Activated naive CD4-positive, alpha-beta T cell treated with anti-CD3 and anti-CD28 coated beads for 36 hours (primary cell): ENCODE measurements at regions of chr4 and their contacts with region 1.

Region 1: GRCh38 chr4:11623726-11624037 is 195.0 kb upstream of the HS3ST1 start:
- DNase-seq: peak; percentile 35
- H3K4me3 Mint-ChIP-seq: no peak overlapping the region
- H3K27ac Mint-ChIP-seq: no peak overlapping the region
- H3K4me1 Mint-ChIP-seq: no peaks in the 10 kb centered on the region
- H3K27me3 Mint-ChIP-seq: no peaks in the 10 kb centered on the region

Region 2: DNA sequence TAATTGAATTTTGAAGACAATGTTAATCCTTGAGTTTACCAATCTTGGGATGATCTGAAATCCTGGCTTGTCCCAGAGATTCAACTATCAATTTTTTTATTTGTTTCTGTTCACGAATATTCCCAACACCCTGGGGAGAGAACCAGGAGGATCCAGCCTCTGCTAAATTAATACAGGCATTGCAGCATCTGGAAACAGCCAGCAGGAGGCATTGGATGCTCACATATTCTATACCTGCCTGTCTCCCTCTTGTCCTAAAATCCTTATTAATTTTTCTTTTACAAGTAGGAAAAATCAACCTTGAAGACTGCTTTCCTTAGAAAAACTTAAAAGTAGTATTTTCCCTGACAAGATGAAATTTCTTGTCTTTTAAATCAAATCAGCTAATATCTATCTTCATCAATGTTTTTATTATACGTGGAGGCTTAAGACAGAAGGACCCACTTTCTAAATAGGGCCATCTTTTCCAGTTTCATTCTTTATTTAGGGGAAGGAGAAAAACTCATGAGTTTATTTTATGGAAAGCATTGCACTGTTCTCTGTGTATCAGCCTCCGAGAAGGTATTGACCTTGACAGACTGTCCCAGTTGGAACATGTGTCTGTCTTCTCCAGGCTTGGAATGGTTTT is 1041.5 kb before region 1 on chr4:
- CTCF ChIA-PET with region 1: no interaction called
- intact Hi-C with region 1: loop called (anchors 5 kb)
- DNase-seq: peak; percentile 37
- H3K4me3 Mint-ChIP-seq: no peak overlapping the region
- H3K27ac Mint-ChIP-seq: no peak overlapping the region
- H3K4me1 Mint-ChIP-seq: peaks cover 15% of the 10 kb centered on the region
- H3K27me3 Mint-ChIP-seq: no peaks in the 10 kb centered on the region

Region 3: GRCh38 chr4:11418610-11419009 is 205.1 kb before region 1 on chr4:
- CTCF ChIA-PET with region 1: no interaction called
- intact Hi-C with region 1: loop called (anchors 1 kb)
- DNase-seq: peak; percentile 22
- H3K4me3 Mint-ChIP-seq: no peak overlapping the region
- H3K27ac Mint-ChIP-seq: no peak overlapping the region
- H3K4me1 Mint-ChIP-seq: no peaks in the 10 kb centered on the region
- H3K27me3 Mint-ChIP-seq: no peaks in the 10 kb centered on the region

Region 4: GRCh38 chr4:11525085-11525484 is 98.6 kb before region 1 on chr4:
- CTCF ChIA-PET with region 1: no interaction called
- intact Hi-C with region 1: no loop called
- DNase-seq: no peak
- H3K4me3 Mint-ChIP-seq: no peak overlapping the region
- H3K27ac Mint-ChIP-seq: no peak overlapping the region
- H3K4me1 Mint-ChIP-seq: no peaks in the 10 kb centered on the region
- H3K27me3 Mint-ChIP-seq: no peaks in the 10 kb centered on the region